CD4-positive, alpha-beta memory T cell (primary cell): ENCODE measurements at regions of chr11 and their contacts with region 1.

Region 1: GRCh38 chr11:61083601-61084147 is 18.6 kb upstream of the CD5 start:
- DNase-seq: peak; percentile 80 to 91 (median 82)
- H3K4me3 ChIP-seq: peak overlapping the region in 1 of 2 donors; percentile 19
- H3K4me3 Mint-ChIP-seq: peak overlapping the region; percentile 75 to 90 (median 86)
- H3K27ac ChIP-seq: peak overlapping the region; percentile 91
- H3K27ac Mint-ChIP-seq: peak overlapping the region; percentile 94 to 100 (median 99)
- H3K4me1 ChIP-seq: peaks cover 55% of the 10 kb centered on the region
- H3K4me1 Mint-ChIP-seq: peaks cover 42 to 65% (median 50%) of the 10 kb centered on the region in 4 donors
- H3K27me3 ChIP-seq: no peaks in the 10 kb centered on the region
- H3K27me3 Mint-ChIP-seq: no peaks in the 10 kb centered on the region

Region 2: GRCh38 chr11:60842668-60843600 is 240.7 kb before region 1 on chr11:
- CTCF ChIA-PET with region 1: no interaction called
- POLR2A ChIA-PET with region 1: no interaction called
- intact Hi-C with region 1: no loop called
- DNase-seq: peak in 1 of 5 donors; percentile 4
- H3K4me3 ChIP-seq: peak overlapping the region; percentile 69 to 87
- H3K4me3 Mint-ChIP-seq: peak overlapping the region; percentile 89 to 99 (median 96)
- H3K27ac ChIP-seq: peak overlapping the region; percentile 68
- H3K27ac Mint-ChIP-seq: peak overlapping the region; percentile 74 to 99 (median 96)
- H3K4me1 ChIP-seq: peaks cover 38% of the 10 kb centered on the region
- H3K4me1 Mint-ChIP-seq: peaks cover 28 to 53% (median 41%) of the 10 kb centered on the region in 4 donors
- H3K27me3 ChIP-seq: no peaks in the 10 kb centered on the region
- H3K27me3 Mint-ChIP-seq: no peaks in the 10 kb centered on the region

Region 3: DNA sequence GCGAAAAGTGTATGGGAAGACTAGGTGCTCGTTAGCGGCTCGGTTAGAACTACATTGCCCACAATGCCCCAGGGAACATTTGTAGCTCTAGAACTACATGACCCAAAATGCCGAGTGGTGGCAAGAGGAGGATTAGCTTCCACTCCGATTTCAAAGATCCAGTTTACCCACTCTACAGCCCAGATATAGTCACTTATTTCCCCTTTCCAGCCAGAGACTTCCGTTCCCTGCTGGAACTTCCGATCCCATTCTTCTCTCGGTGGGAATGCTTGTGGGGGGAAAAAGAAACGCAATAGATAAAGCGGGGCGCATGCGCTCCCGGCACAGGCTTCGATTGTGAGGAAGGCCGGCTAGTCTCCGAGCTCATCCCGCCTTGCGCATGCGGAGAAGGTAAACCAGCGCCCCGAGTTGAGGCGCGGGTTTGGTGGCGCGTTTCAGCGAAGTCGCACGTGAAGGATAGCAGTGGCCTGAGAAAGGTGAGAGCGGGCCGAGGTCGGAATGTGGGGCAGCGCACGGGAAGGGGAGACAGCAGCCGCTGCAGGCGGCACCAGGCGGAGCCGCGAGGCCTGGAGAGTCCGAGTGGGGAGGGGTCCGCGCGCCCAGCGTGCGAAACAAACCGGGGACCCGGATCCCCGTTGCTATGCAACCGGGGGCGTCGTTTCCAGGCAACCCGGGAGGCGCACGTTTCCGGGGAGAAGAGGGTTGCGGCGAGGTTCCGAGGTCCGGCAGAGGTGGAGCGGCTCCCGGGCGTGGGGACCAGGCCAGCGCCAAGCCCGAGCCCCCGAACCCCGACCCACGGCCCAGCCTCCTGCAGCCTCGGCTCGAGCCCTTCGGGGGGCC is 169.7 kb before region 1 on chr11 and contains the start of gene TMEM109:
- CTCF ChIA-PET with region 1: interaction called, 5 read pairs
- POLR2A ChIA-PET with region 1: interaction called, 13 read pairs
- intact Hi-C with region 1: no loop called
- DNase-seq: peak; percentile 90 to 92 (median 91)
- H3K4me3 ChIP-seq: peak within 1 kb of the TSS; percentile 79 to 96
- H3K4me3 Mint-ChIP-seq: peak within 1 kb of the TSS; percentile 92 to 100 (median 98)
- H3K27ac ChIP-seq: peak within 1 kb of the TSS; percentile 96
- H3K27ac Mint-ChIP-seq: peak within 1 kb of the TSS; percentile 87 to 99 (median 98)
- H3K4me1 ChIP-seq: peaks cover 47% of the 10 kb centered on the region
- H3K4me1 Mint-ChIP-seq: peaks cover 31 to 65% (median 44%) of the 10 kb centered on the region in 4 donors
- H3K27me3 ChIP-seq: no peaks in the 10 kb centered on the region
- H3K27me3 Mint-ChIP-seq: no peaks in the 10 kb centered on the region
- total RNA-seq, gene TMEM109: 66.9 to 68.0 TPM

Region 4: DNA sequence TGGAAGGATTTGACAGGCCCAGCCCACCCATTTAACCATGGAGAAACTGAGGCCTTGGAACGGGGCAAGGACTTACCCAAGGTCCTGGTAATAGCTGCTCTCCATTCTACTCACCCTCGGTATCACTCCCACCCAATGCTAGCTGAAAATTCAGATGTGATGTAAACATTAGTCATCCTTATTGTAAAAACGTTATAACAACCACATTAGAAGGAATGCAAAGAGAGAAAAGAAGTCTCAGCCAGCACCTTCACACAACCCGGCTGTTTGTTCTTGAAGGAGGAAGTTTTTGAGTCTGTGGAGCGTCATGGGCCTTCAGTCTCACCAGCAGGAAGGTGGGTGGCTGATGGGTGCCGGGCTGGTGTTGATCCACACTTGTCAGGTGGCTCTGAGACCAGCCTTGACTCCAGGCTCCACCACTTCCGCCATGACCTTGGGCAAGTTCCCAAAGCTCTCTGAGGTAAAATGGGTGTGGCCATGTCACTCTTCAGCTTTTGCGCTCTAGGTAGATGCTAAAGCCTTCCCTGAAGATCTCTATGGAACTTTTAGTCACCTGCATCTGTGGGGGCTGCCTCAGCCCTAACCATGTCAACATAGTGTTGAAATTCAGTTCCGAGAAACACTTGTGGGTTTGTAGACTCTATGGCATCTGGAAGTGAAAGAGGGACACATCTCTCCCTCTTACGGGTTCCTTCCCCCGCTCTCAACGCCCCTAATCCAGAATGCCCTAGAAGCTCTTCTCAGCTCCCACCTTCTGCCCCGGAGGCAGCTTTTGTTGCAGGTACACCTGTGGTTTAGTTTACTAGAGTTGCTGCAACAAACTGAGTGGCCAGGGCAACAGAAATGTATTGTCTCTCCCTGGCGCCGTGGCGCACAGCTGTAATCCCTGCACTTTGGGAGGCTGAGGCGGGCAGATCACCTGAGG is 97.4 kb before region 1 on chr11:
- CTCF ChIA-PET with region 1: interaction called, 15 read pairs
- POLR2A ChIA-PET with region 1: interaction called, 157 read pairs
- intact Hi-C with region 1: loop called (anchors 2 kb)
- DNase-seq: peak; percentile 92 to 99 (median 97)
- H3K4me3 ChIP-seq: peak overlapping the region in 1 of 2 donors; percentile 39
- H3K4me3 Mint-ChIP-seq: peak overlapping the region; percentile 61 to 87 (median 78)
- H3K27ac ChIP-seq: peak overlapping the region; percentile 92
- H3K27ac Mint-ChIP-seq: peak overlapping the region; percentile 88 to 100 (median 97)
- H3K4me1 ChIP-seq: peaks cover 94% of the 10 kb centered on the region
- H3K4me1 Mint-ChIP-seq: peaks cover 69 to 96% (median 86%) of the 10 kb centered on the region in 4 donors
- H3K27me3 ChIP-seq: no peaks in the 10 kb centered on the region
- H3K27me3 Mint-ChIP-seq: no peaks in the 10 kb centered on the region

Region 5: GRCh38 chr11:61004180-61004611 is 79.5 kb before region 1 on chr11:
- CTCF ChIA-PET with region 1: interaction called, 6 read pairs
- POLR2A ChIA-PET with region 1: interaction called, 27 read pairs
- intact Hi-C with region 1: no loop called
- DNase-seq: peak in 3 of 5 donors; percentile 47 to 76 (median 60)
- H3K4me3 ChIP-seq: peak overlapping the region; percentile 5 to 14
- H3K4me3 Mint-ChIP-seq: peak overlapping the region; percentile 63 to 87 (median 83)
- H3K27ac ChIP-seq: peak overlapping the region; percentile 54
- H3K27ac Mint-ChIP-seq: peak overlapping the region; percentile 89 to 97 (median 95)
- H3K4me1 ChIP-seq: peaks cover 93% of the 10 kb centered on the region
- H3K4me1 Mint-ChIP-seq: peaks cover 51 to 90% (median 66%) of the 10 kb centered on the region in 4 donors
- H3K27me3 ChIP-seq: no peaks in the 10 kb centered on the region
- H3K27me3 Mint-ChIP-seq: no peaks in the 10 kb centered on the region

Region 6: GRCh38 chr11:61071208-61071681 is 12.4 kb before region 1 on chr11:
- CTCF ChIA-PET with region 1: interaction called, 26 read pairs
- POLR2A ChIA-PET with region 1: interaction called, 254 read pairs
- intact Hi-C with region 1: no loop called
- DNase-seq: peak; percentile 61 to 77 (median 72)
- H3K4me3 ChIP-seq: peak overlapping the region in 1 of 2 donors; percentile 21
- H3K4me3 Mint-ChIP-seq: peak overlapping the region; percentile 60 to 89 (median 79)
- H3K27ac ChIP-seq: peak overlapping the region; percentile 63
- H3K27ac Mint-ChIP-seq: peak overlapping the region; percentile 92 to 98 (median 96)
- H3K4me1 ChIP-seq: peaks cover 98% of the 10 kb centered on the region
- H3K4me1 Mint-ChIP-seq: peaks cover 50 to 92% (median 74%) of the 10 kb centered on the region in 4 donors
- H3K27me3 ChIP-seq: no peaks in the 10 kb centered on the region
- H3K27me3 Mint-ChIP-seq: no peaks in the 10 kb centered on the region

Region 7: GRCh38 chr11:61111786-61112517 is 28.3 kb after region 1 on chr11:
- CTCF ChIA-PET with region 1: interaction called, 55 read pairs
- POLR2A ChIA-PET with region 1: interaction called, 173 read pairs
- intact Hi-C with region 1: loop called (anchors 5 kb)
- DNase-seq: peak; percentile 64 to 87 (median 72)
- H3K4me3 ChIP-seq: peak overlapping the region in 1 of 2 donors; percentile 20
- H3K4me3 Mint-ChIP-seq: peak overlapping the region in 5 of 8 donors; percentile 37 to 83 (median 75)
- H3K27ac ChIP-seq: peak overlapping the region; percentile 100
- H3K27ac Mint-ChIP-seq: peak overlapping the region in 5 of 7 donors; percentile 78 to 98 (median 89)
- H3K4me1 ChIP-seq: peaks cover 100% of the 10 kb centered on the region
- H3K4me1 Mint-ChIP-seq: peaks cover 0 to 100% (median 82%) of the 10 kb centered on the region in 4 donors
- H3K27me3 ChIP-seq: no peaks in the 10 kb centered on the region
- H3K27me3 Mint-ChIP-seq: no peaks in the 10 kb centered on the region

Region 8: DNA sequence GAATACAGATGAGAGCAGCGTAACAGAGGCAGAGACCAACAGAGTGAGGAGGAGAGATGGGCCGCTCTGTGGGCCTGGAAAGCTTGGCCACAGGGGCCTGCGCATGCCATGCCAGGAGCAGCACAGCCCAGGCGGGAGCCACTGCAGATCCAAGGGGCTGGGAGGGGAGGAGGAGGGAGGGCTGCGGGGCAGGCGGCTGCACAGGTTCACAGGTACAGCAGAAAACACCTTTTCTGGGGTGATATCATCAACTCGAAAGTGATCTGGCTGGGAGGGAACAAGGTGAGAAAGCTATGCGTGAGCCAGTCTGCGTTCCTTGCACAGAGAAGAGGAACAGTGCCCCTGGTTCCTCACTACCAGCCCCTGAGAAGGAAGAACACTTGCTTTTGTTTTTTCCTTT is 62.7 kb after region 1 on chr11:
- CTCF ChIA-PET with region 1: no interaction called
- POLR2A ChIA-PET with region 1: no interaction called
- intact Hi-C with region 1: no loop called
- DNase-seq: no peak
- H3K4me3 ChIP-seq: no peak overlapping the region
- H3K4me3 Mint-ChIP-seq: no peak overlapping the region
- H3K27ac ChIP-seq: no peak overlapping the region
- H3K27ac Mint-ChIP-seq: peak overlapping the region in 1 of 7 donors; percentile 50
- H3K4me1 ChIP-seq: no peaks in the 10 kb centered on the region
- H3K4me1 Mint-ChIP-seq: peaks cover 6 to 15% (median 8%) of the 10 kb centered on the region in 4 donors
- H3K27me3 ChIP-seq: no peaks in the 10 kb centered on the region
- H3K27me3 Mint-ChIP-seq: no peaks in the 10 kb centered on the region

Region 9: DNA sequence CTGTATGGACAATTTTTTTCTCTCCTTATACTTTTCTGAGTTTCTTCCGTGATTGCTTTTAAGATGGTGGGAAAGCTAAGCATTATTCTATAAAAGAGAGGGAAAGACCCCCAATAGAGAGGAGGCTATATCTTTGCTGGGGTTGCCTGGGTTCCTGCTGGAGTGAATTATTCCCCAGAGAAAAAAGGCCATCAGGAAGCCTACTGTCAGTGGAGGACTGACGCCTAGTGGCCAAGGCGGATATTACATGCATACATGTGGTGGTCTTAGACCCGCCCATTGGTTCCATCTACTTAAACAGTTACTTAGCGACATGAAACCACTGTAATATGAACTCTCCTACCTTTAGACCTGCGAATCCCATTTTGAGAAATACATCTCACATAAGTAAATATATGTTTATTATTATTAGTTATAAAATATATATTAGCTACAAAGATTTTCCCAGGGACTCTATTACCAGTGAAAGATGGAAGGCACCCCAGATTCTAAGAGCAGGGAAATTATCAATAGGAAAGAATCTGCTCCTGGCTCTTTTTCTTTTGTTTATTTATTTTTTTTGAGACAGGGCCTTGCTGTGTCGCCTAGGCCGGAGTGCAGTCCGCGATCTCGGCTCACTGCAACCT is 103.9 kb after region 1 on chr11:
- CTCF ChIA-PET with region 1: interaction called, 10 read pairs
- POLR2A ChIA-PET with region 1: no interaction called
- intact Hi-C with region 1: loop called (anchors 2 kb)
- DNase-seq: peak; percentile 66 to 73 (median 71)
- H3K4me3 ChIP-seq: no peak overlapping the region
- H3K4me3 Mint-ChIP-seq: no peak overlapping the region
- H3K27ac ChIP-seq: no peak overlapping the region
- H3K27ac Mint-ChIP-seq: no peak overlapping the region
- H3K4me1 ChIP-seq: no peaks in the 10 kb centered on the region
- H3K4me1 Mint-ChIP-seq: peaks cover 0 to 3% (median 0%) of the 10 kb centered on the region in 4 donors
- H3K27me3 ChIP-seq: no peaks in the 10 kb centered on the region
- H3K27me3 Mint-ChIP-seq: peaks cover 3 to 9% of the 10 kb centered on the region in 2 donors